A673 (cell line): ENCODE measurements at regions of chr18 and their contacts with region 1.

Region 1: GRCh38 chr18:23155537-23155936 is 20.3 kb downstream of the CABLES1 start:
- DNase-seq: no peak
- H3K4me3 ChIP-seq: no peak overlapping the region
- H3K27ac ChIP-seq: no peak overlapping the region
- H3K4me1 ChIP-seq: peaks cover 5% of the 10 kb centered on the region
- H3K27me3 ChIP-seq: no peaks in the 10 kb centered on the region
- CTCF ChIP-seq: no peak

Region 2: DNA sequence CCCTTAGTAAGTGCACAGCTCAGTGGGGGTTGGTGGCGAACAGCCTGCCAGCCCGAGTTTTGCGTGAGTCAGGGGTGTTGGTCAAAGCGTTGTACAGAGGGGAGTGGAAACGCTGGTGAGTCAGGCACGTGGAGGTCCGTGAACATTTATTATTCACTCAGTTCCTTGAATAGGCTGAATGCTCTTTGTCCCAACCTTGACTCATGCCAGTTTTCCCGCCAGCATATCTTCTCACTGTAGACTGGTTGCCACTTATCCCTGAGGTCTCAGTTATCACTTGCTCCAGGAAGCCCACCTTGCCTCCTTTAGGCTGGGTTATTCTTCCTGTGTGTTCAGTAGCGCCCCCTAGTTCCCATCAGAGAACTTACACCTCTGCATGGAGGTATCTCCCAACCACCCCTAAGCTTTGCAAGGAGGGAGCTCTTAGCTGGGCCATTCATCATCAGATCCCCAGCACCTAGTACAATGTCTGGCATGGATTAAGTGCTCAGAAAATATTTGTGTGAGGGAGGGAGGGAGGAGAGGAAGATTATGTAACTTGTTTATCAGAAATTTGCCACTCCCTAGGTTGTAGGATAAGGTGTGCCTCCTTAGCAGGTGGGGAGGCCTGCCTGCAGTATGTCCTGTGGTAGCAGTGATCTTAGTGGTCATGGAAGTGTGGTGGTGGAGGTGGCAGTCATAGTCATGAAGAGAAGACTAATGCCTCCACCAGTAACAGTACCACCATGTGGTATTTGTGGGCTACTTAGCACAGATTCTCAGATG is 51.8 kb after region 1 on chr18:
- CTCF ChIA-PET with region 1: no interaction called
- POLR2A ChIA-PET with region 1: no interaction called
- intact Hi-C with region 1: loop called (anchors 5 kb)
- DNase-seq: no peak
- H3K4me3 ChIP-seq: no peak overlapping the region
- H3K27ac ChIP-seq: no peak overlapping the region
- H3K4me1 ChIP-seq: no peaks in the 10 kb centered on the region
- H3K27me3 ChIP-seq: no peaks in the 10 kb centered on the region
- CTCF ChIP-seq: peak; percentile 66